ENCODE measurements at regions of chr2 and their contacts with region 1.

Region 1: GRCh38 chr2:54665436-54665856 is 58.0 kb upstream of the EML6 start:
- DNase-seq: peak in 6 of 9 experiments; percentile 7 to 66 (median 39)
- ATAC-seq: peak; percentile 68
- H3K4me3 ChIP-seq: no peak overlapping the region
- H3K4me3 Mint-ChIP-seq: no peak overlapping the region
- H3K27ac ChIP-seq: no peak overlapping the region
- H3K27ac Mint-ChIP-seq: peak overlapping the region; percentile 75
- H3K4me1 ChIP-seq: no peaks in the 10 kb centered on the region
- H3K4me1 Mint-ChIP-seq: peaks cover 3% of the 10 kb centered on the region
- H3K27me3 ChIP-seq: no peaks in the 10 kb centered on the region
- H3K27me3 Mint-ChIP-seq: no peaks in the 10 kb centered on the region
- CTCF ChIP-seq: peak; percentile 68

Region 2: GRCh38 chr2:54279385-54279784 is 386.1 kb before region 1 on chr2:
- CTCF ChIA-PET with region 1: no interaction called
- POLR2A ChIA-PET with region 1: no interaction called
- intact Hi-C with region 1: no loop called
- DNase-seq: no peak
- ATAC-seq: no peak
- H3K4me3 ChIP-seq: no peak overlapping the region
- H3K4me3 Mint-ChIP-seq: no peak overlapping the region
- H3K27ac ChIP-seq: no peak overlapping the region
- H3K27ac Mint-ChIP-seq: no peak overlapping the region
- H3K4me1 ChIP-seq: no peaks in the 10 kb centered on the region
- H3K4me1 Mint-ChIP-seq: peaks cover 6% of the 10 kb centered on the region
- H3K27me3 ChIP-seq: no peaks in the 10 kb centered on the region
- H3K27me3 Mint-ChIP-seq: no peaks in the 10 kb centered on the region
- CTCF ChIP-seq: no peak

Region 3: DNA sequence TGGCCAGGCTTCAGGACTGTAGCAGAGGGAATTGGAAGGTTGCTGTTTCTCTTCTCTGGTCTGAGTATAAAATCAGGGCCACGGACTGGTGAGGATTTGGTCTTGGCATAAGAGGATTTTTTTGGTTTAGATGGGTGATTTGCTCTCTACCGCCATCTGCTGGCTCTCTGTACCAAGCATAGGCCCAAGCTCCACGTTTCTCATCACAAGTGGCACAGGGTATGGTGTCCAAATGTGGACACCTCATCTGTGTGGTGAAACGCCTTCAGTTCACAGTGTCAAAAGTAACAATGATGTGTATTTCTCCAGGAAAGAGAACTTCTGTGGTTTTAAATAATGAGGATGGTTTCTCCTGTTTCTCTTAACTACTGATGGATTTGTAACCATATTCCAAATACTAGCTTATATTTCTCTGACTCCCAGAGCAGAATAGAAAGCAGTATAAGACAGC is 173.2 kb after region 1 on chr2:
- CTCF ChIA-PET with region 1: interaction called, 3 read pairs
- POLR2A ChIA-PET with region 1: interaction called, 7 read pairs
- intact Hi-C with region 1: loop called (anchors 2 to 5 kb)
- DNase-seq: peak; percentile 28 to 75 (median 68)
- ATAC-seq: peak; percentile 80
- H3K4me3 ChIP-seq: no peak overlapping the region
- H3K4me3 Mint-ChIP-seq: no peak overlapping the region
- H3K27ac ChIP-seq: no peak overlapping the region
- H3K27ac Mint-ChIP-seq: no peak overlapping the region
- H3K4me1 ChIP-seq: no peaks in the 10 kb centered on the region
- H3K4me1 Mint-ChIP-seq: no peaks in the 10 kb centered on the region
- H3K27me3 ChIP-seq: no peaks in the 10 kb centered on the region
- H3K27me3 Mint-ChIP-seq: no peaks in the 10 kb centered on the region
- CTCF ChIP-seq: peak; percentile 95

Region 4: GRCh38 chr2:55010149-55010591 is 344.7 kb after region 1 on chr2:
- CTCF ChIA-PET with region 1: no interaction called
- POLR2A ChIA-PET with region 1: no interaction called
- intact Hi-C with region 1: loop called in 1 of 2 experiments (anchors 5 kb)
- DNase-seq: peak; percentile 7 to 79 (median 54)
- ATAC-seq: peak; percentile 95
- H3K4me3 ChIP-seq: peak overlapping the region; percentile 24 to 43
- H3K4me3 Mint-ChIP-seq: peak overlapping the region; percentile 93
- H3K27ac ChIP-seq: peak overlapping the region; percentile 40 to 45
- H3K27ac Mint-ChIP-seq: peak overlapping the region; percentile 95
- H3K4me1 ChIP-seq: peaks cover 61% of the 10 kb centered on the region
- H3K4me1 Mint-ChIP-seq: peaks cover 77% of the 10 kb centered on the region
- H3K27me3 ChIP-seq: no peaks in the 10 kb centered on the region
- H3K27me3 Mint-ChIP-seq: no peaks in the 10 kb centered on the region
- CTCF ChIP-seq: no peak

Region 5: GRCh38 chr2:55431982-55432627 is 766.7 kb after region 1 on chr2:
- CTCF ChIA-PET with region 1: no interaction called
- POLR2A ChIA-PET with region 1: no interaction called
- intact Hi-C with region 1: loop called in 1 of 2 experiments (anchors 10 kb)
- DNase-seq: peak in 2 of 9 experiments; percentile 35 to 59
- ATAC-seq: peak; percentile 42
- H3K4me3 ChIP-seq: no peak overlapping the region
- H3K4me3 Mint-ChIP-seq: no peak overlapping the region
- H3K27ac ChIP-seq: no peak overlapping the region
- H3K27ac Mint-ChIP-seq: no peak overlapping the region
- H3K4me1 ChIP-seq: no peaks in the 10 kb centered on the region
- H3K4me1 Mint-ChIP-seq: no peaks in the 10 kb centered on the region
- H3K27me3 ChIP-seq: no peaks in the 10 kb centered on the region
- H3K27me3 Mint-ChIP-seq: no peaks in the 10 kb centered on the region
- CTCF ChIP-seq: peak; percentile 49

Measured in CD8-positive, alpha-beta T cell (primary cell).